Activated CD4-positive, alpha-beta memory T cell treated with anti-CD3 and anti-CD28 coated beads for 36 hours (primary cell): ENCODE measurements at regions of chr12 and their contacts with region 1.

Region 1: GRCh38 chr12:7995266-7995963 is 37.1 kb upstream of the FOXJ2 start:
- DNase-seq: peak; percentile 93
- H3K4me3 Mint-ChIP-seq: no peak overlapping the region
- H3K27ac Mint-ChIP-seq: no peak overlapping the region
- H3K4me1 Mint-ChIP-seq: peaks cover 24% of the 10 kb centered on the region
- H3K27me3 Mint-ChIP-seq: no peaks in the 10 kb centered on the region

Region 2: GRCh38 chr12:7859552-7859951 is 135.9 kb before region 1 on chr12:
- CTCF ChIA-PET with region 1: interaction called, 18 read pairs
- POLR2A ChIA-PET with region 1: interaction called, 3 read pairs
- intact Hi-C with region 1: loop called (anchors 1 kb)
- DNase-seq: no peak
- H3K4me3 Mint-ChIP-seq: no peak overlapping the region
- H3K27ac Mint-ChIP-seq: no peak overlapping the region
- H3K4me1 Mint-ChIP-seq: peaks cover 13% of the 10 kb centered on the region
- H3K27me3 Mint-ChIP-seq: peaks cover 4% of the 10 kb centered on the region

Region 3: GRCh38 chr12:7872566-7873319 is 122.7 kb before region 1 on chr12 and contains the start of gene SLC2A14:
- CTCF ChIA-PET with region 1: no interaction called
- POLR2A ChIA-PET with region 1: no interaction called
- intact Hi-C with region 1: no loop called
- DNase-seq: no peak
- H3K4me3 Mint-ChIP-seq: no peak within 1 kb of the TSS
- H3K27ac Mint-ChIP-seq: no peak within 1 kb of the TSS
- H3K4me1 Mint-ChIP-seq: peaks cover 2% of the 10 kb centered on the region
- H3K27me3 Mint-ChIP-seq: peaks cover 22% of the 10 kb centered on the region
- total RNA-seq, gene SLC2A14: 8.0 to 8.9 TPM

Region 4: GRCh38 chr12:7959701-7960121 is 35.7 kb before region 1 on chr12:
- CTCF ChIA-PET with region 1: interaction called, 32 read pairs
- POLR2A ChIA-PET with region 1: interaction called, 5 read pairs
- intact Hi-C with region 1: loop called (anchors 1 kb)
- DNase-seq: peak; percentile 68
- H3K4me3 Mint-ChIP-seq: peak overlapping the region; percentile 87
- H3K27ac Mint-ChIP-seq: peak overlapping the region; percentile 94
- H3K4me1 Mint-ChIP-seq: peaks cover 33% of the 10 kb centered on the region
- H3K27me3 Mint-ChIP-seq: no peaks in the 10 kb centered on the region

Region 5: DNA sequence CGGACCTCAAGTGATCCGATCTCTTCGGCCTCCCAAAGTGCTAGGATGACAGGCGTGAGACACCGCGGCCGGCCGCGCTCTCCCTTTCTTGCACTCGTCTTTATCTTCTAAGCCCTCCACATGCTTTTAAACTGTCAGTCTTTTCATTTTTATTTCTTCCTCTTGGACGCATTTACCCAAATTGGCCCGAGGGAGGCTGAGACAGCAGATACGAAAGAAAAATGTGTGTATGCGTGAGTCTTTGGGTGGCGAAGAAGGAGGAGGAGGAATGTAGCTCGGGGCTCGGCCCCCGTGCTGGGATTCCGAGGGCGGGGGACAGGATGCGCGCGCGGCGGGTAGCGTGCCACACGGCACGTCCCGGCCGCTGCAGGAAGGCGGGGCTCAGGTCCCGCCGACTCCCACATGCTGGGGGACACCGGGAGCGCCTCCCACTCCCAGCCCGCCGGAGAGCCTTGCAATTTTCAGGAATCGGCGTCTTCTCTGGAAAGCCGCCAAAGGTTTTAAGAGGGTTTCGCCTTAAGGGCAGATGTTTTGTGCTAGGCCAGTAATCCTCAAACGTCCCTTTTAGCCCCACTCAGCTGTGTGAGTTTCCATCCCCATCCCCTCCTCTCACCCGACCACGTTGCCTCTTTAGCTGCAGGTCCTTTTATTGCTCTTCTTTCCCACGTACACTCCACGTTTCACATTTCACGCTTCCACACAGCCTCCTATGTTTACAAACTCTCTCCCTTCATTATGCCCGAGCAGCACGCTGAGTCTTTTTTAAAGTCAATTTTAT is 24.8 kb before region 1 on chr12:
- CTCF ChIA-PET with region 1: interaction called, 17 read pairs
- POLR2A ChIA-PET with region 1: interaction called, 49 read pairs
- intact Hi-C with region 1: loop called (anchors 1 kb)
- DNase-seq: peak; percentile 92
- H3K4me3 Mint-ChIP-seq: peak overlapping the region; percentile 77
- H3K27ac Mint-ChIP-seq: peak overlapping the region; percentile 98
- H3K4me1 Mint-ChIP-seq: peaks cover 34% of the 10 kb centered on the region
- H3K27me3 Mint-ChIP-seq: no peaks in the 10 kb centered on the region

Region 6: DNA sequence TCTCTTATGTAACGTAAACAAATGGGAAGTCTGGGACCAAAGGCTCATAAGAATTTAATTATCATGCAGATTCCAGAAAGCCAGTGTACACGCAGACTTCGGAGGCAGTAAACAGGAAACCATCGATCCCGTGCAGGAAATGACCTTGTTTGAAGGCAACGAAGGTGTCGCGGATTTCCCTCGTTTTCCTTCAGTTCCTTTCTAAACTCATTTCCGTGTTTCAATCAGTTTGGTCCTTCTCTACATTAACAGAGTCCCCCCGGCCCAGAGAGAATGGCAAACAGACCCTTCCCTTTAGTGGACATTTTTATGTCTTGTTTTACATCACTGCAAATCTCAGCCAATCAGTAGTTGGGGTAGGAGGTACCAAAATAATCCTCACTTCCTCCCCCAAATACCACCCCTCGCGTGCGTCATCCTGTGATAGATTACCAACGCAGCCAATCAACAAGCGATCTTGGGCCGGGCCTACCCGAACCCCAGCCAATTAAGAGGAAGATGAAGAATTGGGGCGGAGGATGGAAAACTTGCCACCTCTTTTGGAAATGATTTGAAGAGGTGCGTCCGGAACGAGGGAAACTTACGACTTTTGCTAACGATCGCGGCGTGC is 31.0 kb after region 1 on chr12:
- CTCF ChIA-PET with region 1: no interaction called
- POLR2A ChIA-PET with region 1: no interaction called
- intact Hi-C with region 1: loop called (anchors 1 kb)
- DNase-seq: peak; percentile 98
- H3K4me3 Mint-ChIP-seq: peak overlapping the region; percentile 88
- H3K27ac Mint-ChIP-seq: peak overlapping the region; percentile 100
- H3K4me1 Mint-ChIP-seq: peaks cover 9% of the 10 kb centered on the region
- H3K27me3 Mint-ChIP-seq: no peaks in the 10 kb centered on the region

Region 7: DNA sequence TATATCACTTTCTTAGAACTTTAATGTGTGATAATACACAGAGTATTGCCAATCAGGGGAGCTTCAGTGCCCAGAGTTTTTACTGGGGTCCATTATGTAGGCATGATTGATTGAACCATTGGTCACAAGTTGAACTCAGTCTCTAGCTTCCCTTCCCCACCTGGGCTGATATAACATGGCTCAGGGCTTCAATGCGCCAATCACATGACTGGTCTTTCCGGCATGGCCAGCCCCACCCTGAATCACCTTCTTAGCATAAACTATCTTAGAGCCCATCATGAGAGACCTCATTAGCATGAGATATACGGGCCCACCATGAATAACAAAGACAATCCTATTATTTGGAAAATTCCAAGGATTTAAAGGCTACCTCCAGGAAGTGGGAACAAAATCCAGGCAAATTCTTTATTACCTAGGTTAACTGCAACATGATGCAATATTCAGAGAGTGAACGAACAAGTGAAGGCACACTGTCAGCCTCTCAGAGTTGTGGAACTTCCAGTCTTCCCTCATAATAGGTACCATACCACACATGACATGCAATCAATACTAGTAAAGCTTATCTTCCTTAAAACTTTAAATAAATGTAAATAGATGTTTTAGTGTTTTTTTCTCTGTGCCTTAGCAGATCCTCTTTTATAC is 124.8 kb after region 1 on chr12:
- CTCF ChIA-PET with region 1: no interaction called
- POLR2A ChIA-PET with region 1: no interaction called
- intact Hi-C with region 1: no loop called
- DNase-seq: no peak
- H3K4me3 Mint-ChIP-seq: no peak overlapping the region
- H3K27ac Mint-ChIP-seq: no peak overlapping the region
- H3K4me1 Mint-ChIP-seq: no peaks in the 10 kb centered on the region
- H3K27me3 Mint-ChIP-seq: no peaks in the 10 kb centered on the region

Region 8: GRCh38 chr12:8860165-8860961 is 864.9 kb after region 1 on chr12:
- CTCF ChIA-PET with region 1: no interaction called
- POLR2A ChIA-PET with region 1: no interaction called
- intact Hi-C with region 1: no loop called
- DNase-seq: peak; percentile 46
- H3K4me3 Mint-ChIP-seq: no peak overlapping the region
- H3K27ac Mint-ChIP-seq: no peak overlapping the region
- H3K4me1 Mint-ChIP-seq: no peaks in the 10 kb centered on the region
- H3K27me3 Mint-ChIP-seq: no peaks in the 10 kb centered on the region